ENCODE measurements at regions of chr16 and their contacts with region 1.

Region 1: GRCh38 chr16:57757326-57757786 is 21.8 kb downstream of the KATNB1 start:
- DNase-seq: peak; percentile 98
- H3K4me3 Mint-ChIP-seq: no peak overlapping the region
- H3K27ac Mint-ChIP-seq: no peak overlapping the region
- H3K4me1 Mint-ChIP-seq: no peaks in the 10 kb centered on the region
- H3K27me3 Mint-ChIP-seq: no peaks in the 10 kb centered on the region
- CTCF ChIP-seq: peak; percentile 95

Region 2: DNA sequence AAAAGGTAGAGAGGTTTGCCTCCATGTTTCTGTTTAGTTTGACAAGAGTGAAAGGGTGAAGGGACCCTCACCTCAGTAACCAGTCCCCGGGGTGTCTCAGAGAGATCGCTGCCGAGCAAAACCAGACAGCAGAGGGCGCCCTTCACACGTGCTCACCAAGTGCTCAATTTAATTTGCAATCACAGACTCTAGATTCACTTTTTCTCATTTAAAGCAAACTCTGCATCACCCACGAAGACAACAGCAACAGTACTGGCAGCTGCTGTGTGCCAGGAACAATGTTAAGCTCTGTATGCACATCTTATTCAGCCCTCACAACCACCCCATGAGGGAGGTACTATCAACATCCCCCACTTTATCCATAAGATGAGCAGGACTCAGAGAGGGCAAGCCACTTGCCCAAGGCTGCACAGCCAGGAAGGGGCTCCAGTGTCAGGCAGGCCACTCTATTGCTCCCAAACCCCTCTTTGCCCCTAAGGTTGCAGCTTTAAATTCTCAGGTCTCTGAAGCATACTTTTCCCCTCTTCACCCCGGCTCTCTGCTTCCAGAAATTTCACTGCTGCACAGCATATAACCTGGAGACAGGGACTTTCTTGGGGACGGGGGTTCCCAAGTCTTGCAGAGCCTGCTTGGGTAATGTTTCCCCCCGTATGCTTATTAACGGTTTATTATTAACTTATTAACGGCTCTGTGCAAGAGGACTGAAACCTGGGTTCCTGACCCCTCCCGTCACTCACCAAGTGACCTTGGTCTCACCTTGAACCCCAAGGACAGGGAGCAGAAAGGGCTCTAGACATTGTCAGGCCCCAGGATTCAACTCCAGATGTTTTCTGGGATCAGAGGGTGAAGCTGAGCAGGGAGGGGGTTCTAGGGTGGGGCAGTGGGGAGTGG is 142.7 kb after region 1 on chr16:
- CTCF ChIA-PET with region 1: no interaction called
- intact Hi-C with region 1: loop called (anchors 10 kb)
- DNase-seq: peak; percentile 86
- H3K4me3 Mint-ChIP-seq: no peak overlapping the region
- H3K27ac Mint-ChIP-seq: no peak overlapping the region
- H3K4me1 Mint-ChIP-seq: peaks cover 26% of the 10 kb centered on the region
- H3K27me3 Mint-ChIP-seq: peaks cover 23% of the 10 kb centered on the region
- CTCF ChIP-seq: peak; percentile 85